ENCODE measurements at regions of chr1 and their contacts with region 1.

Region 1: DNA sequence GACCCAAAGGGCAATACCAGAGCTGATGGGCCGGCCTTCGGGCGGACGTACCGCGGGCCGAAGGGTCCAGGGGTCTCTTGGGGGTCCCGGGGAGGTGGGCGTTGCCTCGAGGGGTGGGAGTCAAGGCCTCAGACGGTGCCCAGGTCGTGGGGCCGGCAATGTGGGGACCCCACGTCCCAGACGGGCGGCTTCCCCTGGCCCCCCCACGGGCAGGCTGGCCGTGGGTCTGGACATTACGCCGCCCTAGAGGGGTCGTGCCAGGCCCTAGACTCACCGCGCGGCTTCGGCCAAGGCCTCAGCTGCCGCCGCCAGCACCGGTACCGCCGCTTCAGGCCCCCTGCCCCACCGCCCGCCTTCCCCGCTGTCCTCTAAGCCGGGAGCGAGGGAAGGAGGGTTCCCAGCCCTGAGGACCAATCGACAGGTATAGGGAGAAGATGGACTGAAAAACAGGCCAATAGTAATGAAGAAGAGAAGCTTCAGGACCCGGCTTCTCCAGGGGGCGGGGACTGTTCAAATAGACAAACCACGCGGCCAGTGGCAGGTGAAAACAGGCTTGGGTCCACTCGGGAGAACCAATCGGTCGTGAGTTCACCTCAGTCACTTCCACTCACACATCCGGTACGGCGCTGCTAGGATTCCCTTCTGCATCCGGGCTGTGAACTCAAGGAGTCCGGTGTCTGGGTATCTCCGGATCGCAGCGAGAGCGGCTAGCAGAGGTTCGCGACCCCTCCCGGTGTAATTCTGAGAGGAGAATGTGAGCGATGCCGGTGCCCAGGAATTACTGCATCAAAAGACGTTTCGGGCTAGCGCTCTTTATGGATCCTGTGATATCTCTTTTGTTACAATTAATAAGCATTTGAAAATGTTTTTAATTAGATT is at the start of gene MTOR:
- DNase-seq: peak; percentile 89 to 99 (median 94)
- ATAC-seq: peak; percentile 95
- H3K4me3 ChIP-seq: peak within 1 kb of the TSS; percentile 98
- H3K4me3 Mint-ChIP-seq: peak within 1 kb of the TSS; percentile 94
- H3K27ac ChIP-seq: peak within 1 kb of the TSS; percentile 50 to 69
- H3K27ac Mint-ChIP-seq: peak within 1 kb of the TSS; percentile 89
- H3K4me1 ChIP-seq: peaks cover 22% of the 10 kb centered on the region
- H3K4me1 Mint-ChIP-seq: peaks cover 22% of the 10 kb centered on the region
- H3K27me3 ChIP-seq: no peaks in the 10 kb centered on the region
- H3K27me3 Mint-ChIP-seq: no peaks in the 10 kb centered on the region
- CTCF ChIP-seq: no peak
- total RNA-seq, gene MTOR: 27.3 to 28.9 TPM

Region 2: GRCh38 chr1:11012250-11013171 is 249.9 kb before region 1 on chr1 and contains the start of gene TARDBP:
- CTCF ChIA-PET with region 1: no interaction called
- POLR2A ChIA-PET with region 1: interaction called, 4 read pairs
- intact Hi-C with region 1: loop called in 1 of 2 experiments (anchors 2 kb)
- DNase-seq: peak; percentile 80 to 95 (median 88)
- ATAC-seq: peak; percentile 85
- H3K4me3 ChIP-seq: peak within 1 kb of the TSS; percentile 85
- H3K4me3 Mint-ChIP-seq: peak within 1 kb of the TSS; percentile 94
- H3K27ac ChIP-seq: peak within 1 kb of the TSS; percentile 91 to 99
- H3K27ac Mint-ChIP-seq: peak within 1 kb of the TSS; percentile 98
- H3K4me1 ChIP-seq: peaks cover 44% of the 10 kb centered on the region
- H3K4me1 Mint-ChIP-seq: peaks cover 34% of the 10 kb centered on the region
- H3K27me3 ChIP-seq: no peaks in the 10 kb centered on the region
- H3K27me3 Mint-ChIP-seq: no peaks in the 10 kb centered on the region
- CTCF ChIP-seq: no peak
- total RNA-seq, gene TARDBP: 141 to 149 TPM

Region 3: DNA sequence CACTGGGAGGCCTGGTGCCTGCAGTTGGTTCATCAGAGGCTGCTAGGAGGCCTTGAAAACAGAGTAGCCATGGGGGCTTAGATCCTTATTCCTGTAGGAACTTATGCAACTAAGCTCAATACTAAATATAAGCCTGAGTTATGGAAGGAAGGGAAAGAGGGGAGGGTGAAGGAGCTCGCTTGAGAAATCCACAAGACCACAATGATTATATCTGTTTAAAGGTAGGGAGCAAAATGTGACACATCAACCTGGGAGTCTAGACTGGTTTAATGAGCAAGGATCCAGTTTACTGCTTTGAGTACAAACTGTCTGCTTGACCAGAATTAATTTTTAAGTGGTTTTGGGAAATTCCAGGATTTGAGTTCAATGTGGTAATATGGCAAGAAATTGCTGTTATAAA is 93.7 kb before region 1 on chr1:
- CTCF ChIA-PET with region 1: no interaction called
- POLR2A ChIA-PET with region 1: no interaction called
- intact Hi-C with region 1: no loop called
- DNase-seq: no peak
- ATAC-seq: no peak
- H3K4me3 ChIP-seq: no peak overlapping the region
- H3K4me3 Mint-ChIP-seq: no peak overlapping the region
- H3K27ac ChIP-seq: no peak overlapping the region
- H3K27ac Mint-ChIP-seq: no peak overlapping the region
- H3K4me1 ChIP-seq: no peaks in the 10 kb centered on the region
- H3K4me1 Mint-ChIP-seq: no peaks in the 10 kb centered on the region
- H3K27me3 ChIP-seq: no peaks in the 10 kb centered on the region
- H3K27me3 Mint-ChIP-seq: no peaks in the 10 kb centered on the region
- CTCF ChIP-seq: no peak

Region 4: GRCh38 chr1:11281518-11282331 is 19.3 kb after region 1 on chr1:
- CTCF ChIA-PET with region 1: interaction called, 3 read pairs
- POLR2A ChIA-PET with region 1: interaction called, 45 read pairs
- intact Hi-C with region 1: no loop called
- DNase-seq: no peak
- ATAC-seq: no peak
- H3K4me3 ChIP-seq: no peak overlapping the region
- H3K4me3 Mint-ChIP-seq: peak overlapping the region; percentile 69
- H3K27ac ChIP-seq: peak overlapping the region; percentile 60 to 78
- H3K27ac Mint-ChIP-seq: peak overlapping the region; percentile 96
- H3K4me1 ChIP-seq: peaks cover 70% of the 10 kb centered on the region
- H3K4me1 Mint-ChIP-seq: peaks cover 89% of the 10 kb centered on the region
- H3K27me3 ChIP-seq: no peaks in the 10 kb centered on the region
- H3K27me3 Mint-ChIP-seq: no peaks in the 10 kb centered on the region
- CTCF ChIP-seq: no peak

Region 5: GRCh38 chr1:11289064-11289463 is 26.7 kb after region 1 on chr1:
- CTCF ChIA-PET with region 1: no interaction called
- POLR2A ChIA-PET with region 1: interaction called, 18 read pairs
- intact Hi-C with region 1: no loop called
- DNase-seq: no peak
- ATAC-seq: no peak
- H3K4me3 ChIP-seq: no peak overlapping the region
- H3K4me3 Mint-ChIP-seq: peak overlapping the region; percentile 54
- H3K27ac ChIP-seq: no peak overlapping the region
- H3K27ac Mint-ChIP-seq: peak overlapping the region; percentile 83
- H3K4me1 ChIP-seq: peaks cover 59% of the 10 kb centered on the region
- H3K4me1 Mint-ChIP-seq: peaks cover 87% of the 10 kb centered on the region
- H3K27me3 ChIP-seq: no peaks in the 10 kb centered on the region
- H3K27me3 Mint-ChIP-seq: no peaks in the 10 kb centered on the region
- CTCF ChIP-seq: no peak

Region 6: DNA sequence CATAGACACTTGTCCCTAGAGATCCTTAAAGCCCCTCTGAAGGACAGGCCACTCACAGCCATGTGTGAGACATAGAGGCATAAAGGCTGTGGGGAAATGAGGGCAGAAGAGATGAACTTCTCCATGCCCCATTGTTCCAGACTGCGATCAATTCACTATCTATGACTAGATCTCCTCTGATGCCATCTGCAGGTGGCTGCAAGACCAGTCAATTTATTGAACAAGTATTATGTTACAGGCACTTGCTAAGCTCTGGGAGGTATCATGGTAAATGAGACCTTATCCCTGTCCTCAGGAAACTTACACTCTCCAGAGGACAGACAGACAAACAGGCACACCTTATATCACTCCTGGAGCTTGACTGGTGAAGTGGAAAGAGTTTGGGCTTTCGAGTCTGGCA is 33.5 kb after region 1 on chr1:
- CTCF ChIA-PET with region 1: no interaction called
- POLR2A ChIA-PET with region 1: interaction called, 18 read pairs
- intact Hi-C with region 1: loop called in 1 of 2 experiments (anchors 1 kb)
- DNase-seq: peak in 4 of 14 experiments; percentile 27 to 55 (median 40)
- ATAC-seq: peak; percentile 43
- H3K4me3 ChIP-seq: no peak overlapping the region
- H3K4me3 Mint-ChIP-seq: no peak overlapping the region
- H3K27ac ChIP-seq: no peak overlapping the region
- H3K27ac Mint-ChIP-seq: peak overlapping the region; percentile 76
- H3K4me1 ChIP-seq: peaks cover 50% of the 10 kb centered on the region
- H3K4me1 Mint-ChIP-seq: peaks cover 63% of the 10 kb centered on the region
- H3K27me3 ChIP-seq: no peaks in the 10 kb centered on the region
- H3K27me3 Mint-ChIP-seq: no peaks in the 10 kb centered on the region
- CTCF ChIP-seq: peak; percentile 56